RWPE1 (cell line): ENCODE measurements at regions of chr10 and their contacts with region 1.

Region 1: DNA sequence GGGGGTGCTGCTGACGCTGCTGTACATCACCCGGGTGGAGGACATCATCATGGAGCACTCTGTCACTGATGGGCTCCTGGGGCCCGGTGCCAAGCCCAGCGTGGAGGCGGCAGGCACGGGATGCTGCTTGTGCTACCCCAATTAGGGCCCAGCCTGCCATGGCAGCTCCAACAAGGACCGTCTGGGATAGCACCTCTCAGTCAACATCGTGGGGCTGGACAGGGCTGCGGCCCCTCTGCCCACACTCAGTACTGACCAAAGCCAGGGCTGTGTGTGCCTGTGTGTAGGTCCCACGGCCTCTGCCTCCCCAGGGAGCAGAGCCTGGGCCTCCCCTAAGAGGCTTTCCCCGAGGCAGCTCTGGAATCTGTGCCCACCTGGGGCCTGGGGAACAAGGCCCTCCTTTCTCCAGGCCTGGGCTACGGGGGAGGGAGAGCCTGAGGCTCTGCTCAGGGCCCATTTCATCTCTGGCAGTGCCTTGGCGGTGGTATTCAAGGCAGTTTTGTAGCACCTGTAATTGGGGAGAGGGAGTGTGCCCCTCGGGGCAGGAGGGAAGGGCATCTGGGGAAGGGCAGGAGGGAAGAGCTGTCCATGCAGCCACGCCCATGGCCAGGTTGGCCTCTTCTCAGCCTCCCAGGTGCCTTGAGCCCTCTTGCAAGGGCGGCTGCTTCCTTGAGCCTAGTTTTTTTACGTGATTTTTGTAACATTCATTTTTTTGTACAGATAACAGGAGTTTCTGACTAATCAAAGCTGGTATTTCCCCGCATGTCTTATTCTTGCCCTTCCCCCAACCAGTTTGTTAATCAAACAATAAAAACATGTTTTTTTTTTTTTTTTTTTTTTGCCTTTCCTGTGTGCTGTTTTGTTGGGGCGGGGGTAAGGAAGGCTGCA is 55.8 kb downstream of the TSPAN15 start:
- DNase-seq: no peak
- H3K27ac ChIP-seq: no peak overlapping the region
- CTCF ChIP-seq: no peak

Region 2: DNA sequence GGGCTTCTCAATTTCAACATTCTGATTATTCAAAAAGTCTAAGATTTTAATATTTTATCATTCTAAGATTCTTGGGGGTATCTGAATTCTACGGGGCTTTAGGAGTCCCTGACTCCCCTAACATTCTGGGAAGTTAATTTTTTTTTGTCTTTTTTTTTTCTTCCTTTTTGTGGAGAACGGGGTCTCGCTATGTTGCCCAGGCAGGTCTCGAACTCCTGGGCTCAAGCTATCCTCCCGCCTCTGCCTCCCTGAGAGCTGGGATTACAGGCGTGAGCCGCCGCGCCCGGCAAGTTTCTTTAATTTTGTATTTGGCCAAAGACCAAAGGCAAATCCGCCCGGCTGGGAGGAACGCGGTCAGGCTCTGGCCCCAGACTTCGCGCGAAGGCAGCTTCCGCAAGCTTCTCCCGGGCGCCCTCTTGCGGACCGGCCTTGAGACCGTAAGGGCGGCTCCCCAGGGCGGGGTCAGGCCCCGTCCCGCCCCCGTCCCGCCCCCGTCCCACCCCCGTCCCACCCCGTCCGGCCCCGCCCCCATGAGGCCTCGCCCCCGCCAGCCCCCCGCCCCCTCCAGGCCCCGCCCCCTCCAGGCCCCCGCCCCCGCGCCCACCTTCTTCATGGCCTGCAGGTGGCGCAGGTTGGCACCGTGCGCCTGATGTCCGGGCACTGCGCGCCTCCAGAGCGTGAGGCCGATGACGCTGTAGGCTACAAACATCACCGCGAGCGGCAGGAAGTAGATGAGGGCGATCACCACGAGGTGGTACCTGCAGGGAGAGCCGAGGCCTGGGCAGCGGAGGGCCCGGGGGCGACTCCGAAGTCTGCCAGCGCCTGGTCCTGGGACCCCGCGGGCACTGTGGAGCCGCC is 98.5 kb before region 1 on chr10:
- CTCF ChIA-PET with region 1: interaction called, 26 read pairs
- POLR2A ChIA-PET with region 1: no interaction called
- DNase-seq: peak; percentile 97
- H3K27ac ChIP-seq: peak overlapping the region; percentile 78
- CTCF ChIP-seq: peak; percentile 79

Region 3: DNA sequence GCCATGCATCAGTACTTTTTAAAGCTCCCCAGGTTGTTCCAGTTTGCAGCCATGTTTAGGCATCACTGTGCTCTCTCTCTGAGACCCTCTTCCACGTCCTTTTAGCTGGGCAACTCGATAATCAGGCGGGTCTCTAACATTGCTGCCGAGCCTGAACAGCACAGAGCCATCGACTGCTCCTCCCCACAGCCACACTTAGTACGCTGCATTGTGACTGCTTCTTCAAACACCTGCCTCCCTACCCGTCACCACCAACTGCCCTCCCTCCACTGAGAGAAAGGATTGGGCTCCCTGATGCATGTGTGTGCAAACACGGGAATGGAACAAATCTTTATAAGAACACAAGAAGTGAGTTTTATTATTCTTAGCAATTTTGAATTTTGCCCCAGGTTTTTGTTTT is 78.9 kb before region 1 on chr10:
- CTCF ChIA-PET with region 1: interaction called, 10 read pairs
- POLR2A ChIA-PET with region 1: no interaction called
- DNase-seq: no peak
- H3K27ac ChIP-seq: no peak overlapping the region
- CTCF ChIP-seq: no peak

Region 4: GRCh38 chr10:69439813-69440506 is 67.1 kb before region 1 on chr10:
- CTCF ChIA-PET with region 1: interaction called, 12 read pairs
- POLR2A ChIA-PET with region 1: no interaction called
- DNase-seq: peak; percentile 62
- H3K27ac ChIP-seq: peak overlapping the region; percentile 95
- CTCF ChIP-seq: no peak

Region 5: GRCh38 chr10:69639291-69640195 is 132.5 kb after region 1 on chr10:
- CTCF ChIA-PET with region 1: interaction called, 11 read pairs
- POLR2A ChIA-PET with region 1: no interaction called
- DNase-seq: peak; percentile 83
- H3K27ac ChIP-seq: peak overlapping the region; percentile 82
- CTCF ChIP-seq: peak; percentile 87

Region 6: GRCh38 chr10:69644658-69645295 is 137.7 kb after region 1 on chr10:
- CTCF ChIA-PET with region 1: interaction called, 10 read pairs
- POLR2A ChIA-PET with region 1: no interaction called
- DNase-seq: peak; percentile 85
- H3K27ac ChIP-seq: no peak overlapping the region
- CTCF ChIP-seq: peak; percentile 74